ENCODE measurements at regions of chr2 and their contacts with region 1.

Region 1: GRCh38 chr2:47767880-47768609 is 14.9 kb upstream of the MSH6 start:
- DNase-seq: no peak
- H3K4me3 ChIP-seq: peak overlapping the region in 1 of 4 donors; percentile 21
- H3K27ac ChIP-seq: no peak overlapping the region
- H3K4me1 ChIP-seq: peaks cover 0 to 8% (median 0%) of the 10 kb centered on the region in 3 donors
- H3K27me3 ChIP-seq: no peaks in the 10 kb centered on the region
- CTCF ChIP-seq: peak; percentile 95 to 100 (median 96)
- POLR2A ChIP-seq: no peak

Region 2: GRCh38 chr2:47309952-47310800 is 457.9 kb before region 1 on chr2:
- intact Hi-C with region 1: no loop called
- DNase-seq: peak; percentile 26
- H3K4me3 ChIP-seq: no peak overlapping the region
- H3K27ac ChIP-seq: peak overlapping the region in 3 of 4 donors; percentile 7 to 69 (median 52)
- H3K4me1 ChIP-seq: peaks cover 0 to 15% (median 4%) of the 10 kb centered on the region in 3 donors
- H3K27me3 ChIP-seq: no peaks in the 10 kb centered on the region
- CTCF ChIP-seq: no peak
- POLR2A ChIP-seq: no peak

Region 3: DNA sequence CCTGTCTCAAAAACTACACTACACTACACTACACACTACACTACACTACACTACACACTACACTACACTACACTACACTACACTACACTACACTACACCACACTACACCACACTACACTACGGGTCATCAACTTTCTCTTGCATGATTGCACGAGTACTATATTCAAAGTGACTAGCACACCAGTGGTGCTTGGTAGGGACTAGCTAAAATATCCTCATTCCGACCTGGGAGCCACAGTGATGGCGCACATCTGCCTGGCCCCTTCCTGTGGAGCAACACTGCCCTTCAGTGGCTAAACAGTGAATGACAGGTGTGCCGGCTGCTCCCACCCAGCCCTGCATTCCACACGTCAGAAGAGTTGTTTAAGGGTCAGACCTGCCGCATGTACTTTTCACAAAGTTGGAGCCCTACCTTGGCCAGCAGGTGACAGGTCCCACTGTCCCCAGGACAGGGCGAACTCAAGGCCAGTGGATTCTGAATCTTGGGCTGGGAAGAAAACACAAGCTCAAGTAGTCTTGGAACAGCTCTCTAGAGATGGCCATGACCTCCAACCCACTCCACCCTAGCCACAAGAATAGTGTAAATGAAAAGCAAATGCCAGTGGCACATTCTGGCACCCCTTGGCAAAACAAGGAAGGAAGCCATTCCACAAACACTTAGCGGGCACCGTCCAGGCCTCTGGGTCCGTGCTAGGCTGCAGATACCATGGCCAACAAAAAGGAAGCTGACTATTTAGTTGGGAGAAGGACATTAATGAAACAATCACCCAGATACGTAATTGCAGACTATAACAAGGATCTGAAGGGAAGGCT is 444.8 kb before region 1 on chr2:
- intact Hi-C with region 1: no loop called
- DNase-seq: peak; percentile 24
- H3K4me3 ChIP-seq: no peak overlapping the region
- H3K27ac ChIP-seq: no peak overlapping the region
- H3K4me1 ChIP-seq: peaks cover 0 to 10% (median 0%) of the 10 kb centered on the region in 3 donors
- H3K27me3 ChIP-seq: no peaks in the 10 kb centered on the region
- CTCF ChIP-seq: peak; percentile 85 to 99 (median 96)
- POLR2A ChIP-seq: no peak

Region 4: DNA sequence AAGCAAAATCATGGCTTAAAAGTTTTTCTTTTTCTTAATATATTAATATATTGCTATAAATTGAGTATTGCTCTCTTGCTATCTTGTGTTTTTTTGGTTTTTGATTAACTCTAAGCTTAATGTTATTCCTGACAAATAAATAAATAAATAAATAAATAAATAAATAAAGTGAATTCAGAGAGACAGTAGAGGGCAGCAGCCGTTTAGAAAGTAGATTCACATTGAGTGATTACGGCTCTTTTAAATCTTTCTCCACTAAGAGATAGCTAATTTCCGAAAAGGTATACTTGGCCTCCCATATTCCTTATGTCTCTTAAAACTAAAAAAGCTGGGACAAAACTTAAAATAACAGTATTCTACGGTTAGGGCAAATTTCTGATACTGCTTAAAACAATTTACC is 330.8 kb before region 1 on chr2:
- intact Hi-C with region 1: loop called (anchors 10 kb)
- DNase-seq: no peak
- H3K4me3 ChIP-seq: no peak overlapping the region
- H3K27ac ChIP-seq: no peak overlapping the region
- H3K4me1 ChIP-seq: no peaks in the 10 kb centered on the region
- H3K27me3 ChIP-seq: no peaks in the 10 kb centered on the region
- CTCF ChIP-seq: peak in 3 of 6 experiments; percentile 9 to 37 (median 33)
- POLR2A ChIP-seq: no peak

Region 5: GRCh38 chr2:47602996-47603395 is 165.0 kb before region 1 on chr2:
- intact Hi-C with region 1: no loop called
- DNase-seq: no peak
- H3K4me3 ChIP-seq: no peak overlapping the region
- H3K27ac ChIP-seq: no peak overlapping the region
- H3K4me1 ChIP-seq: no peaks in the 10 kb centered on the region
- H3K27me3 ChIP-seq: no peaks in the 10 kb centered on the region
- CTCF ChIP-seq: no peak
- POLR2A ChIP-seq: no peak